Astrocyte of the cerebellum (primary cell): ENCODE measurements at regions of chr14 and their contacts with region 1.

Region 1: DNA sequence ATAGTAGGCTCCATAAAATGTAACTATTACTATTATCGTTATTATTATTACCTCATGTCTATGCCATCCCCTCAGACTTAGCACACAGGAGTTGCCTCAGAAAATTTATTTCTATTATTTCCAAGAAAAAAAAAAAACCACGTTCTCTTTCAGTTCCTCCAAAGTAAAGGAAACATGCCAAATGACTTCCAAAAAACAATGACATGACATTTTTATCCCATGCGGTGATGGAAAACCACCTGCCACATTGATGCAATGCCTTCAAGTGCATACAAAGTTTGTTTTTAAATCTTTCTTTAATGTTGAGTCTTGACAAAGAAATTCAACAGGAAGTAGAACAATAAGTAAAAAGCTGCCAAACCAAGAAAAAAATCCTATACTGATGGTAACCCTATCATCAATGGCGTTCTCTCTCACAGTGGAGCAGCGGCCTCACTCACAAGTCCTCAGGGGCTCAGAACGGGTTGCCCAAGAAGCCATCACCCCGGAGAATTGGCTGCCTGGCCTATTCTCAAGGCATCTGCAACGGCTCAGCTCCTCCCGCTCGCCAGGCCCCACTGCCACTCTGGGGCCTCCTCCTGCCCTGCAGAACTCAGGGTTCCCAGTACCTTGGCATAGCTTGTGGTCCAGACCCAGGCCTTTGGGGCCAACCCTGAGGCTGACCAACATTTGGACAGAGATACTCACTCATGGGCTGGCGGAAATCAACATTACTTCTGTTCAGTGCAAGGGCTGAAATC is 51.9 kb downstream of the SERPINA3 start:
- DNase-seq: no peak
- H3K4me3 ChIP-seq: no peak overlapping the region
- CTCF ChIP-seq: no peak

Region 2: GRCh38 chr14:94581127-94581999 is 82.8 kb before region 1 on chr14 and contains the start of gene SERPINA5:
- in situ Hi-C with region 1: no loop called
- DNase-seq: no peak
- H3K4me3 ChIP-seq: no peak within 1 kb of the TSS
- CTCF ChIP-seq: no peak

Region 3: GRCh38 chr14:94738751-94739150 is 74.6 kb after region 1 on chr14:
- in situ Hi-C with region 1: loop called (anchors 5 kb)
- DNase-seq: no peak
- H3K4me3 ChIP-seq: no peak overlapping the region
- CTCF ChIP-seq: no peak